Upper lobe of right lung (tissue), 1 donor: ENCODE measurements at regions of chr22 and their contacts with region 1.

Region 1: DNA sequence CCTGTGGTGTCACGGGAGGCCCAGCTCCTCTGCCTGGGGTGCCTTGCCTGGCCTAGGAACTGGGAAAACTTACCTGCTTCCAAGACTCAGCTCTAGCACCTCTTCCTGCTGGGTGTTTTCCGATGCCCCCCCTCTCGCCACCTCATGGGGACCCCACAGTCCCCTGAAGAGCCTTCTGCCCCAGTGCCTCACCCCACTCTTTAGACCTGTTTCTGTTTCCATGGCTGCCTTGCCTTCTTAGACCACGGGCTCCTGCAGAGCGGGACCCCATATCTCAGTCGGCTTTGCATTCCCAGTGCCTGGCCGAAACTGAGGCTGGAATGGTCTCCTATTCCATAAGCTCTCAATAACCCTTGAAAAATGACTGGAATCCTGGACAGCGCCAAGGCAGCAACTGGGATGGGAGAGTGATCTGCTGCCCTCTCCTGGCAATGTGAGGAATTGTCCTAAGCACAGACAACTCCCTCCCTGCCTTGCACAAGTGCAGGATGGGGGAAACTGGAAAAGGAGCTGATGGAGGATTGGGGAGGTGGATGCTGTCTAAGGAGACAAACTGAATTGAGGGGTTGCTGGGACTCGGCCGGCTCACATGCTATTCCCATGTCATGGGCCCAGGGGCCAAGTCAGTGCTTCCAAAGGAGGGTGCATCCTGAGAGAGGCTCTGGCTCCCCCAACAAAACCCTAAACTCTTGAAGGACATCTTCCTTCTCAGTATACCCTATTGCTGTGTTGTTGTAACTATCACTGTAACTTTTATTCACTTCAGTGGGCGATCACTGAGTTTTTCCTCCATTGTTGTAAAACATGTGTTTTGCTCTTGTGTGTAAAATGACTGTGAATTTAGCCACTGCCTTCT is 26.6 kb upstream of the IL17RA start:
- DNase-seq: peak; percentile 69
- ATAC-seq: peak; percentile 93
- H3K4me3 ChIP-seq: no peak overlapping the region
- H3K27ac ChIP-seq: no peak overlapping the region
- H3K4me1 ChIP-seq: peaks cover 2% of the 10 kb centered on the region
- H3K27me3 ChIP-seq: peaks cover 8% of the 10 kb centered on the region
- CTCF ChIP-seq: peak; percentile 92

Region 2: GRCh38 chr22:16922076-16922475 is 136.1 kb before region 1 on chr22:
- intact Hi-C with region 1: loop called (anchors 10 kb)
- DNase-seq: no peak
- ATAC-seq: no peak
- H3K4me3 ChIP-seq: no peak overlapping the region
- H3K27ac ChIP-seq: no peak overlapping the region
- H3K4me1 ChIP-seq: no peaks in the 10 kb centered on the region
- H3K27me3 ChIP-seq: peaks cover 20% of the 10 kb centered on the region
- CTCF ChIP-seq: no peak

Region 3: GRCh38 chr22:17477391-17477833 is 419.2 kb after region 1 on chr22:
- intact Hi-C with region 1: no loop called
- DNase-seq: no peak
- ATAC-seq: peak; percentile 93
- H3K4me3 ChIP-seq: peak overlapping the region; percentile 21
- H3K27ac ChIP-seq: peak overlapping the region; percentile 31
- H3K4me1 ChIP-seq: no peaks in the 10 kb centered on the region
- H3K27me3 ChIP-seq: no peaks in the 10 kb centered on the region
- CTCF ChIP-seq: no peak